Naive thymus-derived CD4-positive, alpha-beta T cell (primary cell): ENCODE measurements at regions of chr13 and their contacts with region 1.

Region 1: DNA sequence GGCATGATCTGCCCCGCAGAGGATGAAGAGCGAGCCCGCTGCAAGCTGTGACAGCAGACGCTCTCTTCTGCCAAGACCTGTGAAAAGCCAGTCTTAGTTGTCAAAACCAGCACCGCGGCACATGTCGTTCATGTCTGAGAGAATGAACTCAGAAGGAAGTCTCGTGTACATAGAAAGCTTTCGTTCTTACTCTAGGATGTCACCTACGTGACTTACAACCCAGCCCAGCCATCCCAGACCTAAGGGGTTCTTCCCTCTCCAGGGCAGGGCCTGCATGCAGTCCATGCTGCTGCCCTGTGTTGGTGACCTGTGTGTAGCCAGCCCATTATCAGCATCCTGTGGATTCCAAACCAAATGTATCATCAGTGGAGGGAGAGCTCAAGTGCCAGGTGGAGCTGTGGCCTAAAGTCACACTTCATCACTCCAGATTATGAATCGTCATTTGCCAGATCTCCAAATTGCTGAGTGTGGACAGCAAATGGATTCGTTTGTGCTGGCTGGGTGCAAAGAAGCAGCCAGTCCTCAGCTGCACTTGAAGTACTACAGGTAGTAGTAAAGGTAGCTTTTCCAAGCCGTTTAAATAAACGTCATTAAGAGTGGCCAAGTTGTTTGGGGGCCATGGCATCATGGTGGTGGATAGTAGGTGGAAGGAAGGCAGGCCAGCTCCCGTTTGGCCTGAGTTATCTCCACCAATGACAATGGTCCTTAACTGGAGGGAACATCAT is 73.9 kb upstream of the GPR183 start:
- DNase-seq: peak in 8 of 9 donors; percentile 55 to 73 (median 62)
- ATAC-seq: peak; percentile 51
- H3K4me3 ChIP-seq: peak overlapping the region; percentile 1
- H3K4me3 Mint-ChIP-seq: peak overlapping the region; percentile 63 to 85 (median 76)
- H3K27ac ChIP-seq: peak overlapping the region; percentile 85
- H3K27ac Mint-ChIP-seq: peak overlapping the region; percentile 94 to 99 (median 98)
- H3K4me1 ChIP-seq: peaks cover 77 to 88% of the 10 kb centered on the region in 2 donors
- H3K4me1 Mint-ChIP-seq: peaks cover 48 to 100% (median 98%) of the 10 kb centered on the region in 7 donors
- H3K27me3 ChIP-seq: no peaks in the 10 kb centered on the region
- H3K27me3 Mint-ChIP-seq: no peaks in the 10 kb centered on the region

Region 2: DNA sequence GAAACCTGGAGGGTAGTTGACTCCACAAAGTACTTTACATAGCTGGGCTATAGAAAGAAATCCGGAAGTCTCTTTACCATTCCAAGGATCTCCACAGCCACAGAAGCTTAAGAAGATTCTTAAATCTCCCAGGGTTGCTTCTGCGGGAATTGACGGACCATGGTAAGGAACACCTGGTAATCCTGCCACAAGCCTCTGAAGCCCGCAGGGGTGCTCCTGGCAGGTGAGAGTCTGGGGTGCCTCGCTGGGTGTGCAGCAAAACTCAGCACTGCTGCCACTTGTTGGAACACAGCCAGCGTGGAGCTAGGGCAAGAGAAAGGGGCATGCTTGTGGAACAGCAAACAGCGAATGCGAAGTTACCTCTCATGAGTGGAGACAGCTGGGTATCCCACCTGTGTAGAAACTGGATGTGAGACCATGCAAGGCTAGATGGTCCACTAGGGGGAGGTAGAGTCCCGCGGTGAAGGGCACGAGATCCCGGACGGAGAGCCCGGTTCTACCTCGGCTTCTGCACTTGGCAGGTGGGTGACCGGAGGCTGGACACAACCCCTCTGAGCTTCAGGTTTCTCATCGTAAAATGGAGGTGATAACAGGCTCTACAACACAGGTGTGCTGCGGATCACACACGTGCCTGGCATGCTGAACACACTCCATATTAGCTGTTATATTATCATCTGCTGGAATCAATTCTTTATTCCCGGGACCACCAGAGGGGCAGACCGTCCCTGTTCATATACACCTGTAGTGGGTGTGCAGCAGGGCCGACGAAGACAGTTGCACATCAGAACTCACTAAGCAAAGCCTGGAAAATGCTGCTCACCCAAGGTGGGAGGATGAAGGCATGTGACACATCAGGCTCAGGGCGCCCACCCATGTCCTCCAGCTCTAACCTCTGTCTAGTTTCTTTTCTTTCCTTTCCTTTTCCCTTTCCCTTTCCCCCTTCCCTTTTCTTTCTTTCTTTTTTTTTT is 204.5 kb before region 1 on chr13:
- CTCF ChIA-PET with region 1: interaction called, 5 read pairs
- POLR2A ChIA-PET with region 1: no interaction called
- intact Hi-C with region 1: loop called (anchors 2 to 5 kb)
- DNase-seq: peak; percentile 54 to 79 (median 71)
- ATAC-seq: peak; percentile 95
- H3K4me3 ChIP-seq: peak overlapping the region; percentile 1
- H3K4me3 Mint-ChIP-seq: peak overlapping the region; percentile 39 to 81 (median 72)
- H3K27ac ChIP-seq: no peak overlapping the region
- H3K27ac Mint-ChIP-seq: peak overlapping the region in 8 of 9 donors; percentile 34 to 77 (median 54)
- H3K4me1 ChIP-seq: peaks cover 22 to 24% of the 10 kb centered on the region in 2 donors
- H3K4me1 Mint-ChIP-seq: peaks cover 26 to 44% (median 39%) of the 10 kb centered on the region in 7 donors
- H3K27me3 ChIP-seq: no peaks in the 10 kb centered on the region
- H3K27me3 Mint-ChIP-seq: peaks cover 0 to 13% (median 0%) of the 10 kb centered on the region in 5 donors

Region 3: DNA sequence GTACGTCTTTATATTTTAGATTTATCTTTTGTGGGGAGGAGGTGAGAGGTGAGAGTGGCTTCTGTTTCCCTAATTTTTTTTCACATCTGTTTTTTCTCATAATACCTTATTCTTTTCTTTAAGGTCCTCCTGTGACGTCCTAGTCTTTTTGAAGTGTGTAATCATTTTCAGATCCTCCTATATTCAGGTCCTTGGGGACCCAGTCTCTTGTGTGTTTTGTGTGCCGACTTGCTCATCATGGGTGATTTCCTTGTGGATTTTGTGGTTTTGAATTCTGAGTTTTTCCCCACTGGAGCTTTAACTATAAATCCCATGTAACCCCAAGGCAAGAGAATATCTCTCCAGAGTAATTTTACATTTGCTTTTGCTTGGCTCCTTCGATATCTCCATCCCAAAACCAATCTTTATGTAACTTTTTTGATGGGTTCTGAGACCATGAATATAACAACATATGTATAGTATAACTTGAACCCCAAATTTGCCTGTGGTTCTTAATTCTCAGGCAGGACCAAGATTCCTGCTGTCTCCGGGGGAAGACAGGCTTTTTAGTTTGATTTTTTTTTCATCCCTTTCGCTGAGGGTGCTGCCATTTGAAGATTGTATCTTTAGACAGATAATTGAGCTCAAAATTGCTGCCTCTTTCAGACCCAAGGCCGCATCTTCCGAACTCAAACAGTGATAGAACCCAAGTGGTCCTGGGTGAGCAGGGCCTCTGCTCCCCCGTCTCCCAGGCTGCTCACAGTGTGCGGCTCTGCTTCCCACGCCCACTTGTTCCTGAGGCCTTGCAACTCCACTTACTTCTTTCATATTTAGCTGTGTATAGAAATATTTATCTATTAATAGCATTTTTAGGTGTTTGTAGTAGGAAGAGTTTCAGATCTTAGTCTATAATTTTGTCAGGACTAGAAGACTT is 14.8 kb before region 1 on chr13:
- CTCF ChIA-PET with region 1: interaction called, 16 read pairs
- POLR2A ChIA-PET with region 1: interaction called, 105 read pairs
- intact Hi-C with region 1: loop called in 1 of 2 experiments (anchors 1 kb)
- DNase-seq: peak in 2 of 9 donors; percentile 21 to 41
- ATAC-seq: peak; percentile 30
- H3K4me3 ChIP-seq: peak overlapping the region; percentile 6
- H3K4me3 Mint-ChIP-seq: peak overlapping the region in 9 of 10 donors; percentile 46 to 87 (median 78)
- H3K27ac ChIP-seq: peak overlapping the region; percentile 78
- H3K27ac Mint-ChIP-seq: peak overlapping the region; percentile 50 to 100 (median 99)
- H3K4me1 ChIP-seq: peaks cover 76 to 81% of the 10 kb centered on the region in 2 donors
- H3K4me1 Mint-ChIP-seq: peaks cover 55 to 100% (median 95%) of the 10 kb centered on the region in 7 donors
- H3K27me3 ChIP-seq: no peaks in the 10 kb centered on the region
- H3K27me3 Mint-ChIP-seq: no peaks in the 10 kb centered on the region

Region 4: GRCh38 chr13:99702687-99703319 is 321.7 kb after region 1 on chr13:
- CTCF ChIA-PET with region 1: no interaction called
- POLR2A ChIA-PET with region 1: no interaction called
- intact Hi-C with region 1: no loop called
- DNase-seq: no peak
- ATAC-seq: no peak
- H3K4me3 ChIP-seq: no peak overlapping the region
- H3K4me3 Mint-ChIP-seq: no peak overlapping the region
- H3K27ac ChIP-seq: no peak overlapping the region
- H3K27ac Mint-ChIP-seq: no peak overlapping the region
- H3K4me1 ChIP-seq: no peaks in the 10 kb centered on the region
- H3K4me1 Mint-ChIP-seq: peaks cover 0 to 8% (median 0%) of the 10 kb centered on the region in 7 donors
- H3K27me3 ChIP-seq: no peaks in the 10 kb centered on the region
- H3K27me3 Mint-ChIP-seq: peaks cover 0 to 2% (median 0%) of the 10 kb centered on the region in 5 donors